Activated CD4-positive, alpha-beta memory T cell treated with anti-CD3 and anti-CD28 coated beads for 36 hours (primary cell): ENCODE measurements at regions of chr1 and their contacts with region 1.

Region 1: DNA sequence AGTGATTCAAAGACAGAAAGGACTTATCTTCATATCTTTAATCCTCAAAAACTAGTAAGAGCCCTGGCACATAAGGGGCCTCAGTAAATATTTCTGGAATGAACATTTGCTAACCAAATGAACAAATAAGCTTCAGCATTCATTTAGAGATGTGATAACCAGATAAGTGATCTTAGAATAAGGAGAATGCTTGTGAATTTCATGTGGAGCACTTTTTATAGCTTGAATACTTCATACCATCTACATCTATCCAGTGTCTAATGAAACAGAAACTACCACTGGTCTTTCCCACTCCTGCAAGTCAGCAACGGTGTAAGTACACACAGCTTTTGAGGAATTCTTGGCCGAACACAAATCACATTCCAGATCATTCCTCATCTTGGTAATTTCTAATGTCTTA is 38.5 kb downstream of the EDEM3 start:
- DNase-seq: no peak
- H3K4me3 Mint-ChIP-seq: no peak overlapping the region
- H3K27ac Mint-ChIP-seq: no peak overlapping the region
- H3K4me1 Mint-ChIP-seq: no peaks in the 10 kb centered on the region
- H3K27me3 Mint-ChIP-seq: no peaks in the 10 kb centered on the region

Region 2: DNA sequence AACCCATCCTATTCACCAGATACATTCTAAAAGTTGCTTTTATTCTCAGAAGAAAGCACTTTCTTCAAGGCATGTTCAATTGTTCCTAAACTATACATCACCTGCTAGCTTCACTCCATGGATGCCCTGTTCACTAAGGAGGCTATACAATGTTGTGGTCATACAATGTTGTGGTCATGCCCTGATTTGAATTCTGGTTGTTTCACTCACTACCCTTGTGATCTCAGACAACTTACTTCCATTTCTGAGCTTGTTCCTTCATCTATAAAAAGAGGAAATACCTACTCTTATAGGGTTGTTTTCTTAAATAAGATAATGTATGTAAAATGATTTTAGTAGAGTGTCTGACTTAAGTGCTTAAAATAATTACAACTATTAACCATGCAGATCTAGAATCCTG is 18.8 kb after region 1 on chr1:
- CTCF ChIA-PET with region 1: no interaction called
- POLR2A ChIA-PET with region 1: no interaction called
- intact Hi-C with region 1: loop called (anchors 1 kb)
- DNase-seq: no peak
- H3K4me3 Mint-ChIP-seq: no peak overlapping the region
- H3K27ac Mint-ChIP-seq: no peak overlapping the region
- H3K4me1 Mint-ChIP-seq: peaks cover 7% of the 10 kb centered on the region
- H3K27me3 Mint-ChIP-seq: no peaks in the 10 kb centered on the region

Region 3: DNA sequence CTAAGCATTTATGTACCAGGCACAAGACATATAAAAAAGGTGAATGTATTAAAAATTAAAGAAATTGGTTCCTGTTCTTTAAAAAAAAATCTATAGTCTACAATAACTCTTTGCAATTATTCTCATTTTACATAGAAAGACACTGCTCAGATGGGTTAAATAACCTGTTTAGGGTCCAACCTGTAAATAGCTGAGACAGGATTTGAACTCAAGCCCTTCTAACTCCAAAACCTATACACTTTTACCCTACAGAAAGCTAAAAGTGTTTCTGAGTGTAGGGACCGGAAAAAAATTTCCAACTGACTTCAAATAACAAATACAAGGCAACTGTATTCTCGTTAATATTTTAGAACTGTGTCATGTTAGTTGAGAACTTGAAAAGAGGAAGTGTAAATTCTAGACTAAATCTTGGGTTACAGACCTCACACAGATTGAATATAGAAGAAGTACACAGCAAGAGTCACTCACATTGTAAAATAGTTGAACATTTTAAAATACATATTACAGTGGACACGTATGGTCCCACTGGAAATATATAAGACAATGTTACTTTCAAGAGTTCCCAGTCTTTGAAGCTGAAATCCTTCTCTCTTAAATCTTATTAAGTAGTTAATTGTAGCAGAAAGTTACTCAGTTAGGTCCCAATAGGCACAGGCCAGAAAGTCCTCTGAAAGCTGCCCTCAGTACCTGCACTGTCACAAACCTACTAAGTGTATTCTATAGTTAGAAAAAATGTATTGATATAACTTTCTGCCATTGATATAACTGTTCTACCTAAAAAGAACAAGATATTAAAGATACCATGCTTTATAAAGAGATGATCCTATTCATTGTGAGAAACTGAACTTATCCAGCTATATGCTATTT is 31.2 kb after region 1 on chr1:
- CTCF ChIA-PET with region 1: no interaction called
- POLR2A ChIA-PET with region 1: no interaction called
- intact Hi-C with region 1: no loop called
- DNase-seq: no peak
- H3K4me3 Mint-ChIP-seq: no peak overlapping the region
- H3K27ac Mint-ChIP-seq: no peak overlapping the region
- H3K4me1 Mint-ChIP-seq: peaks cover 69% of the 10 kb centered on the region
- H3K27me3 Mint-ChIP-seq: no peaks in the 10 kb centered on the region